Vagina (tissue), 2 donors: ENCODE measurements at regions of chr13 and their contacts with region 1.

Region 1: GRCh38 chr13:99176309-99177276 is 24.1 kb upstream of the UBAC2 start:
- DNase-seq: peak in 1 of 2 donors; percentile 83
- H3K4me3 ChIP-seq: no peak overlapping the region
- H3K27ac ChIP-seq: no peak overlapping the region
- H3K4me1 ChIP-seq: peaks cover 4% of the 10 kb centered on the region
- H3K27me3 ChIP-seq: no peaks in the 10 kb centered on the region
- CTCF ChIP-seq: peak; percentile 69 to 91 (median 82)
- POLR2A ChIP-seq: no peak

Region 2: GRCh38 chr13:98717256-98717655 is 459.3 kb before region 1 on chr13:
- intact Hi-C with region 1: no loop called
- DNase-seq: no peak
- H3K4me3 ChIP-seq: no peak overlapping the region
- H3K27ac ChIP-seq: no peak overlapping the region
- H3K4me1 ChIP-seq: no peaks in the 10 kb centered on the region
- H3K27me3 ChIP-seq: no peaks in the 10 kb centered on the region
- CTCF ChIP-seq: no peak
- POLR2A ChIP-seq: no peak

Region 3: GRCh38 chr13:99133230-99133629 is 43.4 kb before region 1 on chr13:
- intact Hi-C with region 1: no loop called
- DNase-seq: no peak
- H3K4me3 ChIP-seq: no peak overlapping the region
- H3K27ac ChIP-seq: no peak overlapping the region
- H3K4me1 ChIP-seq: no peaks in the 10 kb centered on the region
- H3K27me3 ChIP-seq: no peaks in the 10 kb centered on the region
- CTCF ChIP-seq: no peak
- POLR2A ChIP-seq: no peak

Region 4: GRCh38 chr13:99269627-99270241 is 93.1 kb after region 1 on chr13:
- intact Hi-C with region 1: loop called (anchors 5 kb)
- DNase-seq: no peak
- H3K4me3 ChIP-seq: no peak overlapping the region
- H3K27ac ChIP-seq: no peak overlapping the region
- H3K4me1 ChIP-seq: no peaks in the 10 kb centered on the region
- H3K27me3 ChIP-seq: no peaks in the 10 kb centered on the region
- CTCF ChIP-seq: peak in 1 of 3 experiments; percentile 60
- POLR2A ChIP-seq: no peak

Region 5: GRCh38 chr13:99436686-99437416 is 260.3 kb after region 1 on chr13:
- intact Hi-C with region 1: loop called (anchors 5 kb)
- DNase-seq: no peak
- H3K4me3 ChIP-seq: no peak overlapping the region
- H3K27ac ChIP-seq: no peak overlapping the region
- H3K4me1 ChIP-seq: peaks cover 20% of the 10 kb centered on the region
- H3K27me3 ChIP-seq: no peaks in the 10 kb centered on the region
- CTCF ChIP-seq: peak; percentile 99 to 100 (median 100)
- POLR2A ChIP-seq: no peak